ENCODE measurements at regions of chr13 and their contacts with region 1.

Region 1: GRCh38 chr13:28658796-28659620 is at the start of gene POMP:
- DNase-seq: peak; percentile 96
- ATAC-seq: peak; percentile 92
- H3K4me3 Mint-ChIP-seq: peak within 1 kb of the TSS; percentile 98
- H3K27ac Mint-ChIP-seq: peak within 1 kb of the TSS; percentile 93
- H3K4me1 Mint-ChIP-seq: peaks cover 62% of the 10 kb centered on the region
- H3K27me3 Mint-ChIP-seq: no peaks in the 10 kb centered on the region
- CTCF ChIP-seq: no peak
- total RNA-seq, gene POMP: 54.0 and 56.0 TPM in 2 replicates

Region 2: GRCh38 chr13:27620377-27621115 is 1038.5 kb before region 1 on chr13 and contains the start of gene LNX2:
- CTCF ChIA-PET with region 1: no interaction called
- POLR2A ChIA-PET with region 1: no interaction called
- intact Hi-C with region 1: loop called (anchors 5 kb)
- DNase-seq: peak; percentile 97
- ATAC-seq: peak; percentile 87
- H3K4me3 Mint-ChIP-seq: peak within 1 kb of the TSS; percentile 93
- H3K27ac Mint-ChIP-seq: peak within 1 kb of the TSS; percentile 93
- H3K4me1 Mint-ChIP-seq: peaks cover 54% of the 10 kb centered on the region
- H3K27me3 Mint-ChIP-seq: no peaks in the 10 kb centered on the region
- CTCF ChIP-seq: no peak
- total RNA-seq, gene LNX2: 6.1 and 7.1 TPM in 2 replicates

Region 3: GRCh38 chr13:28324181-28324789 is 334.7 kb before region 1 on chr13:
- CTCF ChIA-PET with region 1: interaction called, 4 read pairs
- POLR2A ChIA-PET with region 1: interaction called, 4 read pairs
- intact Hi-C with region 1: loop called (anchors 1 kb)
- DNase-seq: peak; percentile 24
- ATAC-seq: peak; percentile 79
- H3K4me3 Mint-ChIP-seq: no peak overlapping the region
- H3K27ac Mint-ChIP-seq: no peak overlapping the region
- H3K4me1 Mint-ChIP-seq: peaks cover 5% of the 10 kb centered on the region
- H3K27me3 Mint-ChIP-seq: no peaks in the 10 kb centered on the region
- CTCF ChIP-seq: peak; percentile 50

Region 4: DNA sequence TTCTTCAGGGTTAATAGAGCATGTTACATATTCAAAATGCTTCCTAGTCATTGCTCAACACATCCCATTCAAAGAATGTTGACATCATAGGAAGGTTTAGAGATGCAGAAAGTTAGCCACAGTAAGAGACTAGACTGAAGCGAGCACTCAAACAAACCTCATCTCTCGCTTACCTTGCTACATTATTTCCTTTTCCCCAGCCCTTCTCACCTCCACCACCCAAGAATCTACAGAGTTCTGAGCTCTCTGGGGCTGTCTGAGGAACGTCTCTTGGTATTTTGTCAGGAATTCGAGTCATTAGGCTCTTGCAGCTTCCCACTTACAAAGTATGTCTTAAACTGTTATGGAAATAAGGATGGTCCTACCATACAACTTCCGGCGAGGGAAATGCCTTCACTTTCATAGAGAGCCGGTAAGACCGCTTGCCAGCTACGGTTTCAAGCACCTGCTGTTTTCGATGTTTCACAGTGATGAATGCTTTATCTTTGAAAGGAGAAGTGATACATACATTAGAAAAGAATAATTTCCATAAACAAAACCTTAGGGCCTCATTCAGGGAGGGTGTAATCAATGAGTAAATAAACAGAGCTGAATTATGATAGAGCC is 229.2 kb before region 1 on chr13:
- CTCF ChIA-PET with region 1: no interaction called
- POLR2A ChIA-PET with region 1: interaction called, 19 read pairs
- intact Hi-C with region 1: loop called (anchors 1 kb)
- DNase-seq: peak; percentile 19
- ATAC-seq: peak; percentile 92
- H3K4me3 Mint-ChIP-seq: peak overlapping the region; percentile 86
- H3K27ac Mint-ChIP-seq: peak overlapping the region; percentile 97
- H3K4me1 Mint-ChIP-seq: peaks cover 36% of the 10 kb centered on the region
- H3K27me3 Mint-ChIP-seq: peaks cover under 1% of the 10 kb centered on the region
- CTCF ChIP-seq: no peak

Region 5: GRCh38 chr13:28636674-28637317 is 22.2 kb before region 1 on chr13:
- CTCF ChIA-PET with region 1: interaction called, 4 read pairs
- POLR2A ChIA-PET with region 1: interaction called, 14 read pairs
- intact Hi-C with region 1: loop called (anchors 1 kb)
- DNase-seq: no peak
- ATAC-seq: peak; percentile 74
- H3K4me3 Mint-ChIP-seq: peak overlapping the region; percentile 66
- H3K27ac Mint-ChIP-seq: peak overlapping the region; percentile 74
- H3K4me1 Mint-ChIP-seq: peaks cover 36% of the 10 kb centered on the region
- H3K27me3 Mint-ChIP-seq: no peaks in the 10 kb centered on the region
- CTCF ChIP-seq: no peak

Region 6: GRCh38 chr13:28718543-28719226 is 59.7 kb after region 1 on chr13 and contains the start of gene SLC46A3:
- CTCF ChIA-PET with region 1: no interaction called
- POLR2A ChIA-PET with region 1: interaction called, 37 read pairs
- intact Hi-C with region 1: loop called (anchors 1 kb)
- DNase-seq: peak; percentile 95
- ATAC-seq: peak; percentile 98
- H3K4me3 Mint-ChIP-seq: peak within 1 kb of the TSS; percentile 92
- H3K27ac Mint-ChIP-seq: peak within 1 kb of the TSS; percentile 92
- H3K4me1 Mint-ChIP-seq: peaks cover 23% of the 10 kb centered on the region
- H3K27me3 Mint-ChIP-seq: no peaks in the 10 kb centered on the region
- CTCF ChIP-seq: no peak
- total RNA-seq, gene SLC46A3: 8.6 and 11.8 TPM in 2 replicates

Measured in activated B cell treated with CpG ODN at 0.5 μM for 24 hours (primary cell).